CD4-positive, alpha-beta memory T cell (primary cell): ENCODE measurements at regions of chr10 and their contacts with region 1.

Region 1: GRCh38 chr10:89217057-89217990 is 10.2 kb upstream of the CH25H start:
- DNase-seq: peak; percentile 59 to 64 (median 61)
- H3K4me3 ChIP-seq: no peak overlapping the region
- H3K4me3 Mint-ChIP-seq: peak overlapping the region in 2 of 8 donors; percentile 29 to 67
- H3K27ac ChIP-seq: peak overlapping the region; percentile 33
- H3K27ac Mint-ChIP-seq: peak overlapping the region in 4 of 7 donors; percentile 4 to 90 (median 70)
- H3K4me1 ChIP-seq: peaks cover 7% of the 10 kb centered on the region
- H3K4me1 Mint-ChIP-seq: peaks cover 9 to 11% (median 10%) of the 10 kb centered on the region in 4 donors
- H3K27me3 ChIP-seq: no peaks in the 10 kb centered on the region
- H3K27me3 Mint-ChIP-seq: no peaks in the 10 kb centered on the region

Region 2: DNA sequence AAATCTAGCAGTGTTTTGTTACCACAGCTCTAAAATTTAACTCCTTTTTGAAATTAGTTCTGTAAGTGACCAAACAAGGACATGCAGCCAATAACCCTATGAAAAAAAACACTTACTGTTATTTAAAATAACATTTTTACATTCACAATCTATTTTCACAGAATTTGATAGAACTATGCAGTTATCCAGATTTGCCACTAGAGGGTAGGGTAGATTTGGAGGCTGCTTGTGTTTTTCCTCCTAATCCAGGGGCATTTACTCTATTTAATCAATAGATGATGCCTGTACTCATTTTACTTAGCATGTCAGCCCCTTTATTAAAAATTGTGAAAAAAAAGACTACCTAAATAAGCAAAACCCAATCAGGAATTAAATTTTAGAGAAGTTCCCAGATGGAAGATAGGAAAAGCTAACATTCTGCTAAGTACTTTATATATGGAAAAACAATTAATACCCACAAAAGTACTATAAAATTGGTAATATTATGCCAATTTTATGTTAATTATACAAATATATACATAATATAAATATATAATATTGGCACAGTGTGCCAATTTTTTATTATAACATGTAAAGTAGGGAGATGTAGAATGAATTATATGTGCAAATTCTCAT is 529.4 kb before region 1 on chr10:
- CTCF ChIA-PET with region 1: no interaction called
- POLR2A ChIA-PET with region 1: no interaction called
- intact Hi-C with region 1: loop called (anchors 1 kb)
- DNase-seq: peak in 4 of 5 donors; percentile 18 to 26 (median 21)
- H3K4me3 ChIP-seq: no peak overlapping the region
- H3K4me3 Mint-ChIP-seq: no peak overlapping the region
- H3K27ac ChIP-seq: no peak overlapping the region
- H3K27ac Mint-ChIP-seq: no peak overlapping the region
- H3K4me1 ChIP-seq: no peaks in the 10 kb centered on the region
- H3K4me1 Mint-ChIP-seq: no peaks in the 10 kb centered on the region
- H3K27me3 ChIP-seq: no peaks in the 10 kb centered on the region
- H3K27me3 Mint-ChIP-seq: peaks cover 0 to 2% of the 10 kb centered on the region in 2 donors

Region 3: DNA sequence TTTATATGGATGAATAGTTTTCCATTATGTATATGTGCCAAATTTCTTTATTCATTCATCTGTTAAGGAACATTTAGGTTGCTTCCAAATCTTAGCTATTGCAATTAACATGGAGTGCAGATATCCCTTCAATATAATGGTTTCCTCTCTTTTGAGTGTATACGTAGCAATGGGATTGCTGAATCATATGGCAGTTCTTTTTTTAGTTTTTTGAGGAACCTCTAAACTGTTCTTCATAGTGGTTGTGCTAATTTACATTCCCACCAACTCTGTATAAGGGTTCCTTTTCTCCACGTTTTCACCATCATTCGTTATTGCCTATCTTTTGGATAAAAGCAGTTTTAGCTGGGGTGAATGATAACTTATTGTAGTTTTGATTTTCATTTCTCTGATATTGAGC is 180.2 kb before region 1 on chr10:
- CTCF ChIA-PET with region 1: interaction called, 92 read pairs
- POLR2A ChIA-PET with region 1: no interaction called
- intact Hi-C with region 1: no loop called
- DNase-seq: no peak
- H3K4me3 ChIP-seq: no peak overlapping the region
- H3K4me3 Mint-ChIP-seq: no peak overlapping the region
- H3K27ac ChIP-seq: no peak overlapping the region
- H3K27ac Mint-ChIP-seq: no peak overlapping the region
- H3K4me1 ChIP-seq: no peaks in the 10 kb centered on the region
- H3K4me1 Mint-ChIP-seq: peaks cover 5 to 10% (median 5%) of the 10 kb centered on the region in 4 donors
- H3K27me3 ChIP-seq: no peaks in the 10 kb centered on the region
- H3K27me3 Mint-ChIP-seq: no peaks in the 10 kb centered on the region

Region 4: GRCh38 chr10:89163265-89163995 is 53.9 kb before region 1 on chr10:
- CTCF ChIA-PET with region 1: interaction called, 11 read pairs
- POLR2A ChIA-PET with region 1: no interaction called
- intact Hi-C with region 1: no loop called
- DNase-seq: peak; percentile 51 to 75 (median 59)
- H3K4me3 ChIP-seq: no peak overlapping the region
- H3K4me3 Mint-ChIP-seq: peak overlapping the region; percentile 69 to 88 (median 78)
- H3K27ac ChIP-seq: peak overlapping the region; percentile 19
- H3K27ac Mint-ChIP-seq: peak overlapping the region; percentile 53 to 92 (median 72)
- H3K4me1 ChIP-seq: peaks cover 18% of the 10 kb centered on the region
- H3K4me1 Mint-ChIP-seq: peaks cover 15 to 18% (median 17%) of the 10 kb centered on the region in 4 donors
- H3K27me3 ChIP-seq: no peaks in the 10 kb centered on the region
- H3K27me3 Mint-ChIP-seq: peaks cover 0 to 5% of the 10 kb centered on the region in 2 donors

Region 5: GRCh38 chr10:89228962-89229361 is 11.6 kb after region 1 on chr10:
- CTCF ChIA-PET with region 1: interaction called, 12 read pairs
- POLR2A ChIA-PET with region 1: no interaction called
- intact Hi-C with region 1: no loop called
- DNase-seq: no peak
- H3K4me3 ChIP-seq: no peak overlapping the region
- H3K4me3 Mint-ChIP-seq: no peak overlapping the region
- H3K27ac ChIP-seq: no peak overlapping the region
- H3K27ac Mint-ChIP-seq: peak overlapping the region in 1 of 7 donors; percentile 22
- H3K4me1 ChIP-seq: no peaks in the 10 kb centered on the region
- H3K4me1 Mint-ChIP-seq: peaks cover 0 to 12% (median 2%) of the 10 kb centered on the region in 4 donors
- H3K27me3 ChIP-seq: no peaks in the 10 kb centered on the region
- H3K27me3 Mint-ChIP-seq: no peaks in the 10 kb centered on the region

Region 6: GRCh38 chr10:89251409-89252224 is 34.3 kb after region 1 on chr10 and contains the start of gene LIPA:
- CTCF ChIA-PET with region 1: interaction called, 16 read pairs
- POLR2A ChIA-PET with region 1: interaction called, 3 read pairs
- intact Hi-C with region 1: loop called (anchors 1 kb)
- DNase-seq: peak; percentile 92 to 98 (median 95)
- H3K4me3 ChIP-seq: peak within 1 kb of the TSS; percentile 58 to 87
- H3K4me3 Mint-ChIP-seq: peak within 1 kb of the TSS; percentile 84 to 96 (median 90)
- H3K27ac ChIP-seq: peak within 1 kb of the TSS; percentile 56
- H3K27ac Mint-ChIP-seq: peak within 1 kb of the TSS; percentile 60 to 88 (median 81)
- H3K4me1 ChIP-seq: peaks cover 21% of the 10 kb centered on the region
- H3K4me1 Mint-ChIP-seq: peaks cover 17 to 29% (median 21%) of the 10 kb centered on the region in 4 donors
- H3K27me3 ChIP-seq: no peaks in the 10 kb centered on the region
- H3K27me3 Mint-ChIP-seq: peaks cover 3 to 5% of the 10 kb centered on the region in 2 donors
- total RNA-seq, gene LIPA: 55.5 to 60.2 TPM

Region 7: DNA sequence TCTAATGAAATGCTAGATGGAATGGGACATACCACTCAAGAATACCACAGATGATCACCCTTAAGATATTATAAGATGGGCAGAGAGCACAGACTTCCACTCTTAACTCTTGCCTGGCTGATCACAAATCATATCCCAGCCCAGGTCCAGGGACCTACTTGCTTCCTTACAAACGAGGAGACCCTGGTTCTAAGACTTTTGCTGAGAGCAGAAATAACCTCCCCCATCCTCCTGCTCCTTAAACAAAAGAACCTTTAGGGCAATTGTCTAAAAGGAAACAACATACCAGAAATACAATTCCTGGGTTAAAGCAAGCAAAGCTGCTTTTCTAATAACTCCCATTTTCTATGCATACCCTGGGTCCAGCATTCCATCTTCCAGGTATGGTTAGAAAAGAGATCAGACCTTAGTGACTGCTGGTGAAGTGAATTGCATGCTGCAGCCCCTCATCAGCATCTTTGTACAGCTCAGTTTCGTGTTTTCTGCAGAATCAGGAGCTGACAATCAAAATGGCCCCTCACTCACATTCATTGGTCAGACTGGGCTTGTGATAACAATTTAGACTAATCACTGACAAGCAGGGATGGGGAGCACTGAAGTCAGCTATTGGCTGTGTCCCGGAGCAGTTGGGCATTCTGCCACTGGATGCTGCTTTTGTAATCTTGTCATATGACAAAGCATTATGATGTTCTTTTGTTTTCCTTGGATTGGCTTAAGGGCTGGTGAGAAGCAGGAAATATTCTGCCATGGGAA is 125.1 kb after region 1 on chr10:
- CTCF ChIA-PET with region 1: no interaction called
- POLR2A ChIA-PET with region 1: no interaction called
- intact Hi-C with region 1: no loop called
- DNase-seq: no peak
- H3K4me3 ChIP-seq: no peak overlapping the region
- H3K4me3 Mint-ChIP-seq: no peak overlapping the region
- H3K27ac ChIP-seq: no peak overlapping the region
- H3K27ac Mint-ChIP-seq: no peak overlapping the region
- H3K4me1 ChIP-seq: peaks cover 5% of the 10 kb centered on the region
- H3K4me1 Mint-ChIP-seq: peaks cover 3 to 5% (median 5%) of the 10 kb centered on the region in 4 donors
- H3K27me3 ChIP-seq: no peaks in the 10 kb centered on the region
- H3K27me3 Mint-ChIP-seq: peaks cover 0 to 1% of the 10 kb centered on the region in 2 donors

Region 8: GRCh38 chr10:89563861-89564478 is 346.6 kb after region 1 on chr10:
- CTCF ChIA-PET with region 1: interaction called, 12 read pairs
- POLR2A ChIA-PET with region 1: no interaction called
- intact Hi-C with region 1: loop called (anchors 1 kb)
- DNase-seq: peak in 4 of 5 donors; percentile 40 to 48 (median 44)
- H3K4me3 ChIP-seq: no peak overlapping the region
- H3K4me3 Mint-ChIP-seq: no peak overlapping the region
- H3K27ac ChIP-seq: no peak overlapping the region
- H3K27ac Mint-ChIP-seq: no peak overlapping the region
- H3K4me1 ChIP-seq: no peaks in the 10 kb centered on the region
- H3K4me1 Mint-ChIP-seq: no peaks in the 10 kb centered on the region
- H3K27me3 ChIP-seq: no peaks in the 10 kb centered on the region
- H3K27me3 Mint-ChIP-seq: peaks cover 8 to 11% of the 10 kb centered on the region in 2 donors